ENCODE measurements at regions of chr7 and their contacts with region 1.

Region 1: DNA sequence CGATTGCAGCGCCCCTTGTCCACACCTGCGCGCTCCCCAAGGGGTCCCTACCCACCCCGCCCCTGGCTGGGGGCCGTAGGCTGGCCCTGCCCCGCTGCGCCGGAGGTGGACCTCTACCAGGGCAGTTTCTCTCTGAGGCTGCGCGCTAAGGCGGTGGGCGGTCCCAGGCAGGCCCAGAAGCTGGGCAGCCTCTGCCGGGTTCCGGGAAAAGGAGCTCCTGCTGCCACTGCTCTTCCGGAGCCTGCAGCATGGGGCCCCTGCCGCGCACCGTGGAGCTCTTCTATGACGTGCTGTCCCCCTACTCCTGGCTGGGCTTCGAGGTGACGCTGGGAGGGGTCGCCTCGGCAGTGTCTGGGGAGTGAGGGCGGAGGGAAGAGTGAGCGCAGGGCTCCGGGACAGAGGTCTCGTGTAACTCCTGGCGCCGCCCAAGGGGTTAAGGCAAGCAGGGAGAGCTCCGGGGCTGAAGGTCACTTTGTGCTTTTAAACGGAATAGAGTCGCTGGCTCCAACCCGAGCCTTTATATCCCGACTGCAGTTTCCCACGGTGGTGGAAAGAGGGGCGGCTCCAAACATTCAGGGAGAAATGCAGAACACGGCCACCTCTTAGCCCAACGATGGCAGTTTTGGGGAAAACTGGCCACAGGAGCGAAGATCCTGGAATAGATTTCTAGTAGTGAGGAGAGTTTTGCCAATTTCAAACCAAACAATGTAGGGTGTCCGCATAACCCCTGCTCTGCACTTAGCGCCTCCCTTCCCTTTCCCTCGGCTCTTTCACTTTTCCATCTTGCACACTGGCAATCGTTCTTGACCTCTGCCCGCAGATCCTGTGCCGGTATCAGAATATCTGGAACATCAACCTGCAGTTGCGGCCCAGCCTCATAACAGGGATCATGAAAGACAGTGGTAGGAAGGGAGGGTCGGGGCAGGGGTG is at the start of gene GSTK1:
- DNase-seq: peak; percentile 92
- CTCF ChIP-seq: no peak

Region 2: GRCh38 chr7:143181349-143181748 is 82.2 kb before region 1 on chr7:
- in situ Hi-C with region 1: no loop called
- DNase-seq: no peak
- CTCF ChIP-seq: no peak

Region 3: GRCh38 chr7:143447466-143447865 is 183.9 kb after region 1 on chr7:
- in situ Hi-C with region 1: no loop called
- DNase-seq: no peak
- CTCF ChIP-seq: no peak

Region 4: GRCh38 chr7:143846692-143847091 is 583.2 kb after region 1 on chr7:
- in situ Hi-C with region 1: loop called (anchors 25 kb)
- DNase-seq: no peak
- CTCF ChIP-seq: no peak

Measured in GM13976 (cell line).